ENCODE measurements at regions of chr12 and their contacts with region 1.

Region 1: DNA sequence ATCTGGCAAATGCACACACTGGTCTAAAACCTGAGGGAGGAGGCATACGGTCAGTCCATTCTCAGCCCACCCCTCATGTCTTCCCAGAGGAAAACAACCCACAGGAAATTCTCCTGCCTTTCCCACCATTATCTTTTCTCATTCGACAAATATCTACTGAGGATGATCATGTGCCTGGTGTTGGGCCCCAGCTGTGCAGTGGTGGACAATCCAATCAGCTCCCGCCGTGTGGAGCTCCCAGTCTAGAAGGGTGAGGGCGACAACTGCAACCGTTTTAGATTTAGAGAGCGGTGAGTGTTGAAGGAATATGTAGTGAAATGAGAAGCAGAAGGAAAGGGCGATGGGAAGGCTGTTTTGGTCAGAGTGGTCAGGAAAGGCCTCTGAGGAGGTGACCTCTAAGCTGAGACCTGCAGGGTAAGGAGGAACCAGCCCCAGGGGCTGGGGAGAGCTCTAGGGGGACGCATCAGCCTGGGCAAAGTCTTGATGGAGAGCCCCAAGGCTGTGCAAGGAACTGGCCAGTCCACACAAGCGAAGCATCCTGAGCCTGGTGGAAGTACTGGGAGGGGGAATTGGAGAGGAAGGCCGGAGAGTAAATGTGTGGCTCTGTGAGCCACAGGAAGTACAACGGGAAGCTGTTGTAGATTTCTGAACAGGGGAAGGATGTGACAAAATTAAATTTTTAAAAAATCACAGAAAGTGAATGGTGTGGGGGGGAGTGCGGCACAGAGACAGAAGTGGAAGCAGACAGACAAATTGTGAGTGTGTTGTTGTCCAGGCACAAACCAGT is 192.8 kb downstream of the NTF3 start:
- DNase-seq: peak in 1 of 2 donors; percentile 13
- ATAC-seq: peak in 7 of 8 donors; percentile 34 to 91 (median 69)
- H3K4me3 ChIP-seq: no peak overlapping the region
- H3K27ac ChIP-seq: peak overlapping the region in 6 of 10 donors; percentile 15 to 64 (median 50)
- H3K4me1 ChIP-seq: peaks cover 0 to 17% (median 3%) of the 10 kb centered on the region in 9 donors
- H3K27me3 ChIP-seq: no peaks in the 10 kb centered on the region
- CTCF ChIP-seq: no peak

Region 2: DNA sequence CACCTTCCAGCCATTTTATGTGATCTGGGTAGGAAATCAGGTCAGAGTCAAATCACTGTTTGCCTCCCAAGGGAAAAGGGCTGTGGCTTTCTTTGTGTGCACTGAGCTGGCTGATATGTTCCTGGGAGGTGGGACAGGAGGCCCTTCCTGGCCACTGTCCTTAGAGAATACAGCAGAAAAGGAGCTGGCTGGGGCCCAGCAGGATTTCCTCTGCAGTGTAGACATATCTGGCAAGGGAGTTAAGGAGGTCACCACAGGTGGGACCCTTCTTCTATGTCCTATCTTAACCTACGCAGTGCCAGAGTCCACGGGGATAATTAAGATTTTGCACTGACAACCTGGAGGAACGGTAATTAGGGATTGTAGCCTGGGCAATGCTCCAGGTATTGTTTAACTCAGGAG is 47.5 kb before region 1 on chr12:
- intact Hi-C with region 1: loop called in 1 of 10 experiments (anchors 5 kb)
- DNase-seq: peak; percentile 59 to 73
- ATAC-seq: peak; percentile 56 to 87 (median 84)
- H3K4me3 ChIP-seq: no peak overlapping the region
- H3K27ac ChIP-seq: peak overlapping the region in 5 of 10 donors; percentile 32 to 68 (median 43)
- H3K4me1 ChIP-seq: peaks cover 4 to 66% (median 42%) of the 10 kb centered on the region in 9 donors
- H3K27me3 ChIP-seq: peaks cover 0 to 5% (median 0%) of the 10 kb centered on the region in 7 donors
- CTCF ChIP-seq: no peak

Measured in heart right ventricle (tissue), 16 donors.